Heart right ventricle (tissue), 16 donors: ENCODE measurements at regions of chr1 and their contacts with region 1.

Region 1: DNA sequence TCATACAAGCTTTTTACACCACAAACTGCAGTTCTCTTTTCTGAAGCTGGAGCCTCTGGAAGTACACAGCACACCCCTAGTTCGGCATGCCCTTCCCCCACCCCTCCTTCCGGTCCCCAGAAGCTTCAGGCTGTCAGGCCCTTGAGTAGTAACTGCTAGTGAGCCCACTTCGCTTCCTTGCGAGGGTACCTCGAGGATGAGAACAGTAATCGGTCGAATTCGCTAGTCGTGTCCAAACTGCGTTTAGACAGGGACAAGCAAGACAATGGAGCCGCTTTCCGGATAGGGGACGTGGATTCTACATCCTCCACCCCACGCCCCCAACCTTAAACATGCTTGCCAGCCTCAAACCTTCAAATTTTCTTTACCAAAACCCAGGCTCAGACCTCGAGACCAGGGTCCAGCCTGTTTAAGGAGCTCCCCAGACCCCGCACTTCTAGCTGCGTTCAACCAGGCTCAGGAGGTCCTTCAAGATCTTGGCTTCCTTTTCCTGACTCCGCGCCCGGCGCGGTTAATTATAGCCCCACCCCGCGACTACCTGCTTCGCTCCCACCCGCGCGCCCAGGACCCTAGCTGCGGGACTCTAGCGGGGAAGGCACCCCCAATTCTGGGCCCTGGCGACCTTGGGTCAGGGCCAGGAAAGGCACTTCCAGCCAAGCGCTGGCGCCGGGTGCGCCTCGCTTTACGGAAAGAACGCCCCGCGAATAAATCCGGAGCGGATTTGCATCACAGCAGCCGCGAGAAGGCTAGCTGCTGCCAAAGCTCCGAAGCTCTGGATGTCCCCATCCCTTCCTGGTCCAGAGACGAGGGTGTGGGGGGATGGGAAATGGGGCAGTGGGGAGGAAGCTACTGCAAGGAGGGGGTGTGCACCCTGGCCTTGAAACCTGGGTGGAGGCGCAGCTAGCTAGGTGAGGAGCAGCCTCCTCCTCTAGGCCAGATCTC is 8.1 kb upstream of the TSPAN1 start:
- DNase-seq: peak; percentile 74 to 86
- ATAC-seq: peak; percentile 72 to 91 (median 85)
- H3K4me3 ChIP-seq: peak overlapping the region; percentile 20 to 58 (median 52)
- H3K27ac ChIP-seq: peak overlapping the region; percentile 86 to 96 (median 92)
- H3K4me1 ChIP-seq: peaks cover 9 to 54% (median 39%) of the 10 kb centered on the region in 9 donors
- H3K27me3 ChIP-seq: peaks cover 0 to 26% (median 0%) of the 10 kb centered on the region in 7 donors
- CTCF ChIP-seq: no peak

Region 2: DNA sequence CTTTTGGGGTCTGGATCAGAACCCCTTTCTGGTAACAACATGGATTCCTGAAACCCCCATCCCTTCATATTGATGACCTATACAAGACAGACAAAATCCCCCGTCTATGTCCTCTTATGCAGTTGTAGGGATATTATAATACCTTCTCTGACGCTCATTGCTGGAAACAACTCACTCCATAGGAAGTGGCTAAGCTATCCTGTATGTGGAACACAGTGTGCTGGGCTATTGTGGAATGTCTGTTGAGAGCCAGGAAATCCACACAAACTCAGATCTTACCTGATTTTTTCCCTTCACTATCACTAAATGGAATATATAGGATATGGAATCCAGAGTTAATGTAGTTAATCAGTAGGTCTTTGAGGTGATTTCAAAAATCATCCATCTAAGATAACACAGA is 16.7 kb before region 1 on chr1:
- intact Hi-C with region 1: loop called in 1 of 10 experiments (anchors 1 kb)
- DNase-seq: no peak
- ATAC-seq: peak; percentile 58 to 95 (median 79)
- H3K4me3 ChIP-seq: no peak overlapping the region
- H3K27ac ChIP-seq: peak overlapping the region; percentile 26 to 78 (median 67)
- H3K4me1 ChIP-seq: peaks cover 0 to 14% (median 3%) of the 10 kb centered on the region in 9 donors
- H3K27me3 ChIP-seq: no peaks in the 10 kb centered on the region
- CTCF ChIP-seq: no peak

Region 3: GRCh38 chr1:46303038-46303871 is 136.5 kb after region 1 on chr1 and contains the starts of genes LRRC41 and UQCRH:
- intact Hi-C with region 1: no loop called
- DNase-seq: peak; percentile 93 to 96
- ATAC-seq: peak; percentile 91 to 96 (median 92)
- H3K4me3 ChIP-seq: peak within 1 kb of the TSS; percentile 76 to 98 (median 90)
- H3K27ac ChIP-seq: peak within 1 kb of the TSS; percentile 95 to 99 (median 98)
- H3K4me1 ChIP-seq: peaks cover 13 to 76% (median 69%) of the 10 kb centered on the region in 9 donors
- H3K27me3 ChIP-seq: no peaks in the 10 kb centered on the region
- CTCF ChIP-seq: peak in 1 of 9 donors; percentile 27
- total RNA-seq, gene LRRC41: 36.7 to 52.5 (median 43.6) TPM
- total RNA-seq, gene UQCRH: 759 to 1,195 (median 1,005) TPM

Region 4: GRCh38 chr1:46431691-46432090 is 264.9 kb after region 1 on chr1:
- intact Hi-C with region 1: no loop called
- DNase-seq: no peak
- ATAC-seq: no peak
- H3K4me3 ChIP-seq: no peak overlapping the region
- H3K27ac ChIP-seq: no peak overlapping the region
- H3K4me1 ChIP-seq: no peaks in the 10 kb centered on the region
- H3K27me3 ChIP-seq: peaks cover 0 to 16% (median 0%) of the 10 kb centered on the region in 7 donors
- CTCF ChIP-seq: no peak